ENCODE measurements at regions of chr19 and their contacts with region 1.

Region 1: DNA sequence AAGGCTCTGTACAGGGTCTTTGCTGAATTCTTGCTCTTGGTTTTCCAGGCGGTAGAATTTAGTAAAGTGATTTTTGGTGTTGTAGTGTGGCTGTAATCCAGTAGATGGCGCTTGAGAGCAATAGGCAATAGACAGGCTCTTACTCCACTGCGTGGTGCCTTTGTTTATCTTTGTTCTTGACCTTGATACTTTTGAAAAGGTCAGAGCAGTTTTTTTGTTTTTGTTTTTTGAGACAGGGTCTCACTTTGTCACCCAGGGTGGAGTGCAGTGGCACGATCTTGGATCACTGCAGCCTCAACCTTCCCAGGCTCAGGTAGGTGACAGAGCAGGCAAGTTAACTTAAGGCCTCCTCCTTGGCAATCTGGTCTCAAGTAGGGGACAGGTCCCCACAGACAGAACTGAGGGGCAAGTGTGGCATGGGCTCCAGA is 12.2 kb upstream of the LILRA5 start:
- DNase-seq: peak; percentile 38
- H3K4me3 Mint-ChIP-seq: no peak overlapping the region
- H3K27ac Mint-ChIP-seq: no peak overlapping the region
- H3K4me1 Mint-ChIP-seq: peaks cover 14% of the 10 kb centered on the region
- H3K27me3 Mint-ChIP-seq: peaks cover 12% of the 10 kb centered on the region

Region 2: GRCh38 chr19:54357381-54357780 is 32.2 kb after region 1 on chr19:
- CTCF ChIA-PET with region 1: interaction called, 7 read pairs
- POLR2A ChIA-PET with region 1: no interaction called
- intact Hi-C with region 1: loop called (anchors 1 kb)
- DNase-seq: no peak
- H3K4me3 Mint-ChIP-seq: no peak overlapping the region
- H3K27ac Mint-ChIP-seq: no peak overlapping the region
- H3K4me1 Mint-ChIP-seq: peaks cover 21% of the 10 kb centered on the region
- H3K27me3 Mint-ChIP-seq: no peaks in the 10 kb centered on the region